ENCODE measurements at regions of chr1 and their contacts with region 1.

Region 1: DNA sequence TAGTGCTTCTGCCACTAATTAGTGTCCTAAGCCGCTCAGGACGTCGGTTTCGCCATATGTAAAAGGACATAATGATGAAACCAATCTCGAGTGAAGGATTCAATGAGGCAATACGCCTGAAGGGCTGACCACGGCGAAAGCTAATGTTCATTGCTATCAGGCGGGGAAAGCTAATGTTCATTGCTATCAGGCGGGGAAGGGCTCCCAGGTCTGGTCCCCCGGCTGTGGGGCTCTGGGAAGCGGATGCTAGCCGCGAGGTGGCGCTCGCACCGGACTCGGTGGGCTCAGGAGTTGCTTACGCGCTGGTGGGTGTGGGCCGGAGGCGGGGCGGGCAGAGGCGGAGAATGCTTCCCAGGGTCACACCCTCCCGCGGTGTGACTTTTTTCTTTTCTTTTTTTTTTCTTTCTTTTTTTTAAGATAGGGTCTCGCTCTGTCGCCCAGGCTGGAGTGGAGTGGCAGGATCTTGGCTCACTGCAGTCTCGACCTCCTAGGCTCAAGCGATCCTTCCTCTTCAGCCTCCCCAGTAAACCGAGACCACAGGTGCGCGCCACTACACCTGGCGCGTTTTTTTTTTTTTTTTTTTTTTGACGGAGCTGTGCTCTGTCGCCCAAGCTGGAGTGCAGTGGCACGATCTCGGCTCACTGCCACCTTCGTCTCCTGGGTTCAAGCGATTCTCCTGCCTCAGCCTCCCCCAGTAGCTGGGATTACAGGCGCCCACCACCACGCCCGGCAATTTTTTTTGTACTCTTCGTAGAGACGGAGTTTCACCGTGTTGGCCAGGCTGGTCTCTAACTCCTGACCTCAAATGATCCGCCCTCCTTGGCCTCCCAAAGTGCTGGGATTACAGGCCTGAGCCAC is 1.1 kb upstream of the PEAR1 start:
- DNase-seq: peak; percentile 77 to 82 (median 80)
- H3K4me3 ChIP-seq: peak overlapping the region in 1 of 2 donors; percentile 34
- H3K4me3 Mint-ChIP-seq: peak overlapping the region; percentile 69 to 84 (median 73)
- H3K27ac ChIP-seq: no peak overlapping the region
- H3K27ac Mint-ChIP-seq: peak overlapping the region in 6 of 7 donors; percentile 25 to 77 (median 54)
- H3K4me1 ChIP-seq: peaks cover 22% of the 10 kb centered on the region
- H3K4me1 Mint-ChIP-seq: peaks cover 7 to 29% (median 9%) of the 10 kb centered on the region in 4 donors
- H3K27me3 ChIP-seq: peaks cover 11% of the 10 kb centered on the region
- H3K27me3 Mint-ChIP-seq: peaks cover 20 to 32% of the 10 kb centered on the region in 2 donors

Region 2: GRCh38 chr1:156797212-156797871 is 95.1 kb before region 1 on chr1:
- CTCF ChIA-PET with region 1: interaction called, 130 read pairs
- POLR2A ChIA-PET with region 1: interaction called, 4 read pairs
- intact Hi-C with region 1: loop called (anchors 1 kb)
- DNase-seq: peak; percentile 66 to 75 (median 74)
- H3K4me3 ChIP-seq: no peak overlapping the region
- H3K4me3 Mint-ChIP-seq: no peak overlapping the region
- H3K27ac ChIP-seq: no peak overlapping the region
- H3K27ac Mint-ChIP-seq: peak overlapping the region in 6 of 7 donors; percentile 12 to 45 (median 24)
- H3K4me1 ChIP-seq: peaks cover 17% of the 10 kb centered on the region
- H3K4me1 Mint-ChIP-seq: peaks cover 18 to 30% (median 21%) of the 10 kb centered on the region in 4 donors
- H3K27me3 ChIP-seq: no peaks in the 10 kb centered on the region
- H3K27me3 Mint-ChIP-seq: no peaks in the 10 kb centered on the region

Region 3: GRCh38 chr1:156852418-156852874 is 40.0 kb before region 1 on chr1:
- CTCF ChIA-PET with region 1: interaction called, 12 read pairs
- POLR2A ChIA-PET with region 1: no interaction called
- intact Hi-C with region 1: no loop called
- DNase-seq: no peak
- H3K4me3 ChIP-seq: no peak overlapping the region
- H3K4me3 Mint-ChIP-seq: no peak overlapping the region
- H3K27ac ChIP-seq: no peak overlapping the region
- H3K27ac Mint-ChIP-seq: no peak overlapping the region
- H3K4me1 ChIP-seq: peaks cover 13% of the 10 kb centered on the region
- H3K4me1 Mint-ChIP-seq: peaks cover 2 to 18% (median 14%) of the 10 kb centered on the region in 4 donors
- H3K27me3 ChIP-seq: no peaks in the 10 kb centered on the region
- H3K27me3 Mint-ChIP-seq: peaks cover 2 to 4% of the 10 kb centered on the region in 2 donors

Region 4: GRCh38 chr1:156880473-156880872 is 11.9 kb before region 1 on chr1:
- CTCF ChIA-PET with region 1: interaction called, 12 read pairs
- POLR2A ChIA-PET with region 1: no interaction called
- intact Hi-C with region 1: no loop called
- DNase-seq: no peak
- H3K4me3 ChIP-seq: no peak overlapping the region
- H3K4me3 Mint-ChIP-seq: no peak overlapping the region
- H3K27ac ChIP-seq: no peak overlapping the region
- H3K27ac Mint-ChIP-seq: no peak overlapping the region
- H3K4me1 ChIP-seq: no peaks in the 10 kb centered on the region
- H3K4me1 Mint-ChIP-seq: no peaks in the 10 kb centered on the region
- H3K27me3 ChIP-seq: no peaks in the 10 kb centered on the region
- H3K27me3 Mint-ChIP-seq: peaks cover 25 to 48% of the 10 kb centered on the region in 2 donors

Region 5: DNA sequence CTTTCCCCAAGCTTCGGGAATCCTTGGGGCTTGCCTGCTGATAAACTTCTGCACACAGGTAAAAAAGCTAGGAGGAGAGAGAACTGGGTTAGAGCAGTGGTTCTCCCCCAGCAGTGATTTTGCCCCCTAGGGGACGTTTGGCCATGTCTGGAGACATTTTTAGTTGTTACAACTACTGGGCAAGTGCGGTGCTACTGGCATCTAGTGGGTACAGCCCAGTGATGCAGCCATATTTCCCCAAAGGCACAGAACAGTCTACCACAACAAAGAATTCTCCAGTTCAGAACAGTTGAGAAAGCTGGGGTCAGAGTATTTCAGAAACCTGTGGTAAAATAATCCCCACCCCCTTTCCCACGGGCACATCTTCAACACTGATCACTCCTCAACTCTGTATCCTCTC is 69.3 kb after region 1 on chr1:
- CTCF ChIA-PET with region 1: interaction called, 72 read pairs
- POLR2A ChIA-PET with region 1: no interaction called
- intact Hi-C with region 1: no loop called
- DNase-seq: peak in 4 of 5 donors; percentile 37 to 54 (median 38)
- H3K4me3 ChIP-seq: no peak overlapping the region
- H3K4me3 Mint-ChIP-seq: peak overlapping the region in 7 of 8 donors; percentile 49 to 72 (median 59)
- H3K27ac ChIP-seq: no peak overlapping the region
- H3K27ac Mint-ChIP-seq: peak overlapping the region in 3 of 7 donors; percentile 36 to 72 (median 46)
- H3K4me1 ChIP-seq: peaks cover 37% of the 10 kb centered on the region
- H3K4me1 Mint-ChIP-seq: peaks cover 28 to 47% (median 33%) of the 10 kb centered on the region in 4 donors
- H3K27me3 ChIP-seq: no peaks in the 10 kb centered on the region
- H3K27me3 Mint-ChIP-seq: peaks cover 0 to 1% of the 10 kb centered on the region in 2 donors

Region 6: DNA sequence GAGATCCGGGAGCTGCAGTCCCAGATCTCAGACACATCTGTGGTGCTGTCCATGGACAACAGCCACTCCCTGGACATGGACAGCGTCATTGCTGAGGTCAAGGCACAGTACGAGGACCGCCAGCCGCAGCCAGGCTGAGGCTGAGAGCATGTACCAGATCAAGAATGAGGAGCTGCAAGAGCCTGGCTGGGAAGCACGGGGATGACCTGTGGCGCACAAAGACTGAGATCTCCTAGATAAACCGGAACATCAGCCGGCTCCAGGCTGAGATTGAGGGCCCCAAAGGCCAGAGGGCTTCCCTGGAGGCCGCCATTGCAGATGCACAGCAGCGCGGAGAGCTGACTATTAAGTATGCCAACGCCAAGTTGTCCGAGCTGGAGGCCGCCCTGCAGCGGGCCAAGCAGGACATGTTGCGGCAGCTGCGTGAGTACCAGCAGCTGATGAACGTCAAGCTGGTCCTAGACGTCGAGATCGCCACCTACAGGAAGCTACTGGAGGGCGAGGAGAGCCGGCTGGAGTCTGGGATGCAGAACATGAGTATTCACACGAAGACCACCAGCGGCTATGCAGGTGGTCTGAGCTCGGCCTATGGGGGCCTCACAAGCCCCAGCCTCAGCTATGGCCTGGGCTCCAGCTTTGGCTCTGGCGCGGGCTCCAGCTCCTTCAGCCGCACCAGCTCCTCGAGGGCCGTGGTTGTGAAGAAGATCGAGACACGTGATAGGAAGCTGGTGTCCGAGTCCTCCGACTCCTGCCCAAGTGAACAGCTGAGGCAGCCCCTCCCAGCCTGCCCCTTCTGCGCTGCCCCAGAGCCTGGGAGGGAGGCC is 181.7 kb after region 1 on chr1:
- CTCF ChIA-PET with region 1: interaction called, 5 read pairs
- POLR2A ChIA-PET with region 1: interaction called, 3 read pairs
- intact Hi-C with region 1: loop called (anchors 10 kb)
- DNase-seq: peak in 4 of 5 donors; percentile 4 to 21 (median 12)
- H3K4me3 ChIP-seq: no peak overlapping the region
- H3K4me3 Mint-ChIP-seq: peak overlapping the region in 1 of 8 donors; percentile 11
- H3K27ac ChIP-seq: no peak overlapping the region
- H3K27ac Mint-ChIP-seq: no peak overlapping the region
- H3K4me1 ChIP-seq: no peaks in the 10 kb centered on the region
- H3K4me1 Mint-ChIP-seq: peaks cover 0 to 9% (median 3%) of the 10 kb centered on the region in 4 donors
- H3K27me3 ChIP-seq: no peaks in the 10 kb centered on the region
- H3K27me3 Mint-ChIP-seq: peaks cover 19 to 29% of the 10 kb centered on the region in 2 donors